GM10248 (cell line): ENCODE measurements at regions of chr12 and their contacts with region 1.

Region 1: DNA sequence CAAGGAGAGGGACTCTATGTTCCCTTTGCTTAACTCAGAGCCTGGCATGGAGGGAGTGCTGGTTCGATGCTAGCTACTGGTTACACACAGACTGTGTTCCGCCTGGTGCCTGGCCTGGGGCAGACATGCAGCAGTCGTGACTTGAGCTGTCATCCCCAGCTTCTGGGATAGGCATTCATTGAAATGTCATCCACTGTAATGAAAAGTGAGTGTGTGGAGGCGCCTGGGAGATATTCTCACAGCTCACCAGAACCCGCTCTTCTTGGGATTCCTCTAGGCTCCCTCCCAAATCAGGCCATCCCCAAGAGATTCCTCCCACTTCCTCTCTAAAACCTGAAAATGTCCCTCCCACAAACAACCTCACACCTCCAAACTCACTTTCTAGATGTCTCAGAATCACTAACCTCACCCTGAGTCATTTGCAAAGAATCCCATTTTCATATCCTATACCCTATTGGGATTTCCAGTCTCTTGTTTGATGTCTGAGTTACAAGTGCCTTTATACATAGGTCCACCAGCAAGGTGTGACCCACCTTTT is 82.8 kb downstream of the CRACR2A start:
- DNase-seq: no peak
- CTCF ChIP-seq: no peak

Region 2: DNA sequence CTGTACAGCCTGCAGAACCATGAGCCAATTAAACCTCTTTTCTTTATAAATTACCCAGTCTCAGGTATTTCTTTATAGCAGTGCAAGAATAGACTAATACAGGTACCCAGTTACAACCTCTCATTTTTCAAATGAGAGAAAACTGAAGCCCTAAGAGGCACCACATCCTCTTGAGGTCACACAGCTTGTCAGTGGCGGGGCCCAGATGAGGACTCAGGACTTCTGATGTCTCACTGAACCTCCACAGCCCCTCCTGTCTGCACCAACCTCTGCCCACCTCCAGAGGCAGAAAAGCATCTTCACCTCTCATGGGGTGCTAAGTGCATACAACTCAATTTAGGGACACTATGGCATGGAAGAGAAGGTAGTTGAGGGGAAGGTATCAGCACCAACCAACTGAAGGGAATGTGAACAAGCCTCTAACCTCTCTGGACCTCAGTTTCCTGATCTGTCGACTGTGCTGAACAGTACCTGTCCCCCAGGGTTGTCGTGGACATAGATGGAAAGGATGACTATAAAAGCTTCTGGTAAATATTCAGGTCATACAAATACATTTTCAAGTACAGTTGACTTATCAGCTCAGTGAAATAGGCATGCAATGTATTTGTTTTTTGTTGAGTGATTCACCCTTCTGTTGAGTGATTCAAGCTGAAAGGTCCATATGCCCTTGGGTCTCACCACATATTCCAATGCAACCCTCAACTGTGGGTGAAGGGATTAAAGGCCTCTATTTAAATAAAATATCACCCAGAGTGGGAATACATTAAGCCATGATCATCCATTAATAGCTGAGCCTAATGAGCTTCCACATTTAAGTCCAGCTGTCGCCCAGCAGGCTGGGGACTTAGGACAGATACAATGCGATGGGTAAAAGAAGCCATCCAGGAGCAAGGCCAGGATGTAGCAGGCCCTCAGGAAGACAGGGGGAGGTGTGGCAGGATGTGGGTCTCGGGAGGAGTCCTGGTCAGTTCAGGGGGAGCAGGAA is 37.6 kb before region 1 on chr12:
- CTCF ChIA-PET with region 1: no interaction called
- POLR2A ChIA-PET with region 1: no interaction called
- DNase-seq: no peak
- CTCF ChIP-seq: no peak

Region 3: DNA sequence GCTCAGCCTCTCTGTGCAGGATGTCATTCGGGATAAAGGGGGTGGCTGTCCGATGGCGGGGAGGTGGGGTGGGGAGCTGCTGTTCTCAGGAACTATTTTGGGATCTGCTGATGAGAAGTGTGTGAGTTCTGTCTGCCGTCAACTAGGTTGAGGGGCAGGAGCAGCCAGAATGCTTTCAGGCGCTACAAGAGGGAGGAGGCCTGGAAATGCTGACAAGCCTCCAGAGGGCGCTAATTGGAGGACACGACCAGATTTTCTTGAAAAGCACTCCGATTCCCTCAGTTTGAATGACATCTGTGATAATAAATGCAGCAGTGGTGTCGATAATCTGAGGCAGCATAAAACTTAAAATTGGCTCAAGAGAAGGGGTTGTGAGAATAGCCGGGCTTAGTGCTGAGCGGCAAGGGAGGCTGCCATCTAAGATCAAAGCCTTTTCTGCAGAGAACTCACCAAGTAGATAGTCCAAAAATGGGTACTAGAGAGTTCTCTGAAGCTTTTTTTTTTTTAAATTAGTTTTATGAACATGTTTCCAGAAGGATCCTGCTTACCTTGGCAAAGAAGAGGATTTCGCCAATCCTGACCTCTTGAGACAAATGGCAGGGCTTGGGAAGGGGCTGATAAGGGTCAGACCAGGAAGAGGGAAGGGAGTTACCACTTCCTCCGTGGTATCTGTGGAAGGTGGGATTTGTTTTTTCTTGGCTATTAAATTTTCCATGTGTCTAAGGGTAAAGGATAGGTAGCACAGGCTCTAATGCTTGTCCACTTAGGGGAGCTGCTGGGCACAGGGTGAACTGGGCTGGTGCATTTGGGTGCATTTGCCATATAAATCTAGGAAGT is 11.6 kb before region 1 on chr12:
- CTCF ChIA-PET with region 1: interaction called, 10 read pairs
- POLR2A ChIA-PET with region 1: no interaction called
- DNase-seq: peak; percentile 37
- CTCF ChIP-seq: peak; percentile 32